ENCODE measurements at regions of chr13 and their contacts with region 1.

Region 1: GRCh38 chr13:41848435-41849255 is 112.3 kb downstream of the VWA8 start:
- DNase-seq: peak; percentile 9
- H3K4me3 ChIP-seq: no peak overlapping the region
- H3K27ac ChIP-seq: no peak overlapping the region
- H3K4me1 ChIP-seq: no peaks in the 10 kb centered on the region
- H3K27me3 ChIP-seq: no peaks in the 10 kb centered on the region
- CTCF ChIP-seq: peak in 1 of 2 donors; percentile 38

Region 2: GRCh38 chr13:41487222-41487621 is 361.4 kb before region 1 on chr13:
- CTCF ChIA-PET with region 1: interaction called, 10 read pairs
- dilution Hi-C with region 1: no loop called
- in situ Hi-C with region 1: no loop called
- intact Hi-C with region 1: no loop called
- DNase-seq: no peak
- H3K4me3 ChIP-seq: no peak overlapping the region
- H3K27ac ChIP-seq: no peak overlapping the region
- H3K4me1 ChIP-seq: no peaks in the 10 kb centered on the region
- H3K27me3 ChIP-seq: no peaks in the 10 kb centered on the region
- CTCF ChIP-seq: no peak

Region 3: GRCh38 chr13:41891119-41891518 is 42.5 kb after region 1 on chr13:
- CTCF ChIA-PET with region 1: no interaction called
- dilution Hi-C with region 1: no loop called
- in situ Hi-C with region 1: no loop called
- intact Hi-C with region 1: no loop called
- DNase-seq: no peak
- H3K4me3 ChIP-seq: no peak overlapping the region
- H3K27ac ChIP-seq: no peak overlapping the region
- H3K4me1 ChIP-seq: no peaks in the 10 kb centered on the region
- H3K27me3 ChIP-seq: no peaks in the 10 kb centered on the region
- CTCF ChIP-seq: no peak

Region 4: GRCh38 chr13:43023289-43023951 is 1174.8 kb after region 1 on chr13 and contains the start of gene DNAJC15:
- CTCF ChIA-PET with region 1: no interaction called
- dilution Hi-C with region 1: no loop called
- in situ Hi-C with region 1: no loop called
- intact Hi-C with region 1: no loop called
- DNase-seq: no peak
- H3K4me3 ChIP-seq: peak within 1 kb of the TSS; percentile 60 to 78 (median 64)
- H3K27ac ChIP-seq: peak within 1 kb of the TSS; percentile 80
- H3K4me1 ChIP-seq: peaks cover 5% of the 10 kb centered on the region
- H3K27me3 ChIP-seq: no peaks in the 10 kb centered on the region
- CTCF ChIP-seq: peak in 1 of 2 donors; percentile 28
- total RNA-seq, gene DNAJC15: 9.3 to 20.7 TPM

Measured in mammary epithelial cell (primary cell).